Activated B cell treated with CpG ODN at 0.5 μM for 24 hours (primary cell): ENCODE measurements at regions of chr17 and their contacts with region 1.

Region 1: GRCh38 chr17:81860756-81861518 is 602 bp upstream of the P4HB start:
- DNase-seq: peak; percentile 100
- ATAC-seq: peak; percentile 90
- H3K4me3 Mint-ChIP-seq: peak overlapping the region; percentile 89
- H3K27ac Mint-ChIP-seq: peak overlapping the region; percentile 94
- H3K4me1 Mint-ChIP-seq: peaks cover 30% of the 10 kb centered on the region
- H3K27me3 Mint-ChIP-seq: no peaks in the 10 kb centered on the region
- CTCF ChIP-seq: no peak

Region 2: DNA sequence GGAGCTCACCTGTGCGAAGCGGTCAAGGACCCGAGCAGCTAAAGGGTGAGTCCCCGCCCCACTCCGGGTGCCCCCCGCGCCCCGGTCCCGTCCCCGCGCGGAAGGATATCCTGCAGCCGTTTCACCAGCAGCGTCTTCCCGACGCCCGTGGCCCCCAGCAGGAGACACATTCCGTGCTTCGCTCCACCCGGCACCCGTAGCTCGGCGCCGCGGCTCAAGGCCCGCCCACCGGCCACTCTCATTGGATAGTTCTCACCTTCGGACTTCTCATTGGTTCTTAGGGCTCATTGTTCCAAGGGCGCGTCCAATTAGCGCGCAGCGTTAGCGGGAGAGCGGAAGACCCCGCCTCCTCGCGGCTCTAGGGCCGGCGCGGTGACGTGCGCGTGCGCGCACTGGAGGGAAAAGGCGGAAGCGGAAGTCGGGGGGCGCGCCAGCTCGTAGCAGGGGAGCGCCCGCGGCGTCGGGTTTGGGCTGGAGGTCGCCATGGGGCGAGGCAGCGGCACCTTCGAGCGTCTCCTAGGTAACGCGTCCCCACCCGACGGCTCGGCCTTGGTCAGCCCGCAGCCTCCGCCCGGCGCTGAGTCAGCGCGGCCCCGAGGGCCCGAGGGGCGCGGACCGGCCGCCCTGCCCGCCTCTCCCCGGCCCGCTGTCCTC is 177.2 kb before region 1 on chr17 and contains the starts of genes ARL16 and HGS:
- CTCF ChIA-PET with region 1: no interaction called
- POLR2A ChIA-PET with region 1: interaction called, 8 read pairs
- intact Hi-C with region 1: loop called (anchors 1 kb)
- DNase-seq: peak; percentile 96
- ATAC-seq: peak; percentile 97
- H3K4me3 Mint-ChIP-seq: peak within 1 kb of the TSS; percentile 95
- H3K27ac Mint-ChIP-seq: peak within 1 kb of the TSS; percentile 91
- H3K4me1 Mint-ChIP-seq: peaks cover 34% of the 10 kb centered on the region
- H3K27me3 Mint-ChIP-seq: no peaks in the 10 kb centered on the region
- CTCF ChIP-seq: no peak
- total RNA-seq, gene ARL16: 30.7 and 33.3 TPM in 2 replicates
- total RNA-seq, gene HGS: 132 and 151 TPM in 2 replicates

Region 3: GRCh38 chr17:81733507-81734404 is 127.2 kb before region 1 on chr17:
- CTCF ChIA-PET with region 1: no interaction called
- POLR2A ChIA-PET with region 1: interaction called, 14 read pairs
- intact Hi-C with region 1: loop called (anchors 1 kb)
- DNase-seq: peak; percentile 63
- ATAC-seq: peak; percentile 66
- H3K4me3 Mint-ChIP-seq: no peak overlapping the region
- H3K27ac Mint-ChIP-seq: no peak overlapping the region
- H3K4me1 Mint-ChIP-seq: peaks cover 24% of the 10 kb centered on the region
- H3K27me3 Mint-ChIP-seq: peaks cover 19% of the 10 kb centered on the region
- CTCF ChIP-seq: peak; percentile 35

Region 4: GRCh38 chr17:81890447-81891299 is 29.7 kb after region 1 on chr17:
- CTCF ChIA-PET with region 1: no interaction called
- POLR2A ChIA-PET with region 1: interaction called, 4 read pairs
- intact Hi-C with region 1: loop called (anchors 1 kb)
- DNase-seq: no peak
- ATAC-seq: no peak
- H3K4me3 Mint-ChIP-seq: peak overlapping the region; percentile 88
- H3K27ac Mint-ChIP-seq: peak overlapping the region; percentile 84
- H3K4me1 Mint-ChIP-seq: peaks cover 30% of the 10 kb centered on the region
- H3K27me3 Mint-ChIP-seq: no peaks in the 10 kb centered on the region
- CTCF ChIP-seq: no peak

Region 5: DNA sequence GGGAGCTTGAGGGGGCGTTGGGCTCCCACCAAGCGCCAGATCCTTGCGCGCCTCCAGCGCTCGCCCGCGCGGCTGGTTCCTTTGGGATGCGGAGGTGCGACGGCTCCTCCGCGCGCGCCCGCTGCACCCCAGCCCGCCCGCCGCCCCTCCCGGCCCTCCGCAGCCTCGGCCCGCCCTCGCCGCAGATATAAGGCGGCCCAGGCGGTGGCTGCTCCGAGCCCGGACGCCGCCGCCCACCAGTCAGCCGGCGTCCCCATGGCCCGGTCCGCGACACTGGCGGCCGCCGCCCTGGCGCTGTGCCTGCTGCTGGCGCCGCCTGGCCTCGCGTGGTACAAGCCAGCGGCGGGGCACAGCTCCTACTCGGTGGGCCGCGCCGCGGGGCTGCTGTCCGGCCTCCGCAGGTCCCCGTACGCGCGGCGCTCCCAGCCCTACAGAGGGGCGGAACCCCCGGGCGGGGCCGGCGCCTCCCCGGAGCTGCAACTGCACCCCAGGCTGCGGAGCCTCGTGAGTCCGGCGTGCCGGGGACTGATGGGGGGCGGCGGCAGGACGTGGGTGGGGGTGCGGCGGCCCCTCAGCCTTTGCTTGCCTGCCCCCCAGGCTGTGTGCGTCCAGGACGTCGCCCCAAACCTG is 41.2 kb after region 1 on chr17 and contains the start of gene NPB:
- CTCF ChIA-PET with region 1: no interaction called
- POLR2A ChIA-PET with region 1: no interaction called
- intact Hi-C with region 1: no loop called
- DNase-seq: no peak
- ATAC-seq: peak; percentile 38
- H3K4me3 Mint-ChIP-seq: no peak within 1 kb of the TSS
- H3K27ac Mint-ChIP-seq: no peak within 1 kb of the TSS
- H3K4me1 Mint-ChIP-seq: peaks cover 5% of the 10 kb centered on the region
- H3K27me3 Mint-ChIP-seq: peaks cover 10% of the 10 kb centered on the region
- CTCF ChIP-seq: no peak
- total RNA-seq, gene NPB: 0.24 and 0.27 TPM in 2 replicates

Region 6: GRCh38 chr17:81977211-81978027 is 116.5 kb after region 1 on chr17 and contains the start of gene ASPSCR1:
- CTCF ChIA-PET with region 1: no interaction called
- POLR2A ChIA-PET with region 1: interaction called, 9 read pairs
- intact Hi-C with region 1: loop called (anchors 2 kb)
- DNase-seq: peak; percentile 94
- ATAC-seq: peak; percentile 92
- H3K4me3 Mint-ChIP-seq: peak within 1 kb of the TSS; percentile 95
- H3K27ac Mint-ChIP-seq: peak within 1 kb of the TSS; percentile 93
- H3K4me1 Mint-ChIP-seq: peaks cover 27% of the 10 kb centered on the region
- H3K27me3 Mint-ChIP-seq: no peaks in the 10 kb centered on the region
- CTCF ChIP-seq: no peak
- total RNA-seq, gene ASPSCR1: 40.0 and 50.0 TPM in 2 replicates